ENCODE measurements at regions of chr2 and their contacts with region 1.

Region 1: GRCh38 chr2:156589381-156590079 is 153.4 kb downstream of the GPD2 start:
- DNase-seq: no peak
- H3K4me3 ChIP-seq: no peak overlapping the region
- H3K27ac ChIP-seq: no peak overlapping the region
- H3K4me1 ChIP-seq: peaks cover 0 to 3% (median 3%) of the 10 kb centered on the region in 4 donors
- H3K27me3 ChIP-seq: no peaks in the 10 kb centered on the region
- CTCF ChIP-seq: peak; percentile 54 to 58 (median 54)
- EP300 ChIP-seq: no peak
- POLR2A ChIP-seq: no peak

Region 2: DNA sequence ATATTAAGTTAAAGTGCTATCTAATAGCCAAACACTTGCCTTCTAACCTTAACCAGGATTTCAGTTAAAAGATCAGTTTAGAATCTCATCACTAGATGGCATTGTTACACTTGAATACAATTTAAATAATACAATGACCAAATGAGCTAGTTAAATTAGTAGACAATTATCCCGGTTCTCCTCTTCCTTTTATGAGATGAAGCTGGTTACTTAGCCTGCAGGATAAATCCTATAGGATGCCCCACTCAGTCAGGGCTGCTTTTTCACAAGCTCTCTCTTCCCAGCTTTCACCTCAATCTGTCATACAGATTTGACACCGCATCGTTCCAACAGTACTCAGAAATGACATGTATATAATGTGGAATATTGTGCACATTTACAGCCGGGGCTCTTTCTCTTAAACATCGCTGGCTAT is 1212.3 kb before region 1 on chr2:
- intact Hi-C with region 1: loop called (anchors 10 kb)
- DNase-seq: no peak
- H3K4me3 ChIP-seq: no peak overlapping the region
- H3K27ac ChIP-seq: no peak overlapping the region
- H3K4me1 ChIP-seq: no peaks in the 10 kb centered on the region
- H3K27me3 ChIP-seq: no peaks in the 10 kb centered on the region
- CTCF ChIP-seq: peak in 1 of 3 experiments; percentile 35
- EP300 ChIP-seq: no peak
- POLR2A ChIP-seq: no peak

Region 3: GRCh38 chr2:156192468-156192867 is 397.1 kb before region 1 on chr2:
- intact Hi-C with region 1: loop called (anchors 10 kb)
- DNase-seq: no peak
- H3K4me3 ChIP-seq: no peak overlapping the region
- H3K27ac ChIP-seq: no peak overlapping the region
- H3K4me1 ChIP-seq: no peaks in the 10 kb centered on the region
- H3K27me3 ChIP-seq: no peaks in the 10 kb centered on the region
- CTCF ChIP-seq: peak in 1 of 3 experiments; percentile 17
- EP300 ChIP-seq: no peak
- POLR2A ChIP-seq: no peak

Region 4: DNA sequence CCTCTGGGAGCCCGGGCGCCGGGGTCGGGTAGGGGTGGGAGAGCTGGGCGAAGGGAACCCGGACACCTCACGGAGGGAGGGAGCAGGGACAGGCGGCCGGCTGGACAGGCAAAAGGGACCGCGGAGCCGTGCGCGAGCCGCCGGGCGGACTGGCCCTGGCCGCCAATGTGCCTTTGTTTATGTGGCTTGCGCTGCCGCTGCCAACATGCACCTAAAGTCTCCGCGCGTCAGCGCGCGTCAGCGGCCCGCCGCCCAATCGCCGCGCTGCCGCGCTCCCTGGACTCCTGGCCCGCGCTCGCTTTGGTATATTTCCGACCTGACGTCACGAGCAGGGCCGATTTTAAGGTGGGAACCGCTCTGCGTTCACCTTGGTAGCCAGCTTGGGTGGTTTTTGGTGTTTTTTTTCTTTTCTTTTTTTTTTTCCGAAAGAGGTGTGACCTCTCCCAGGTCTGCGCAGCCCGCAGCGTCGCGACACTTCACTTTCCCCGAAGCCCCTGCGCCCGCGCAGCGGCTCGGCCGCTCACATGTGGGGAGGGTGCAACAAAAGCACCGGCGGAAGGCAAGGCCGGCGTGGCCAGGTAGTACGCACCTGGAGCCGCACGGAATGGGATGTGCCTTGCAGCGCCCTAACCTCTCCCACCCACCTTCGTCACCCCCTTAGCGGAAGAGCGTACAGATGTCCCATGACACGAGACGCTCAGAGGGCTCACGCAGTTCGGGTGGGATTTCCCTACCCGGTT is 256.8 kb before region 1 on chr2 and contains the start of gene NR4A2:
- intact Hi-C with region 1: loop called (anchors 5 kb)
- DNase-seq: no peak
- H3K4me3 ChIP-seq: peak within 1 kb of the TSS; percentile 75 to 84 (median 80)
- H3K27ac ChIP-seq: peak within 1 kb of the TSS; percentile 97 to 100 (median 99)
- H3K4me1 ChIP-seq: peaks cover 9 to 48% (median 34%) of the 10 kb centered on the region in 4 donors
- H3K27me3 ChIP-seq: no peaks in the 10 kb centered on the region
- CTCF ChIP-seq: no peak
- EP300 ChIP-seq: no peak
- POLR2A ChIP-seq: peak; percentile 83
- total RNA-seq, gene NR4A2: 0.42 to 2.8 (median 2.5) TPM

Region 5: DNA sequence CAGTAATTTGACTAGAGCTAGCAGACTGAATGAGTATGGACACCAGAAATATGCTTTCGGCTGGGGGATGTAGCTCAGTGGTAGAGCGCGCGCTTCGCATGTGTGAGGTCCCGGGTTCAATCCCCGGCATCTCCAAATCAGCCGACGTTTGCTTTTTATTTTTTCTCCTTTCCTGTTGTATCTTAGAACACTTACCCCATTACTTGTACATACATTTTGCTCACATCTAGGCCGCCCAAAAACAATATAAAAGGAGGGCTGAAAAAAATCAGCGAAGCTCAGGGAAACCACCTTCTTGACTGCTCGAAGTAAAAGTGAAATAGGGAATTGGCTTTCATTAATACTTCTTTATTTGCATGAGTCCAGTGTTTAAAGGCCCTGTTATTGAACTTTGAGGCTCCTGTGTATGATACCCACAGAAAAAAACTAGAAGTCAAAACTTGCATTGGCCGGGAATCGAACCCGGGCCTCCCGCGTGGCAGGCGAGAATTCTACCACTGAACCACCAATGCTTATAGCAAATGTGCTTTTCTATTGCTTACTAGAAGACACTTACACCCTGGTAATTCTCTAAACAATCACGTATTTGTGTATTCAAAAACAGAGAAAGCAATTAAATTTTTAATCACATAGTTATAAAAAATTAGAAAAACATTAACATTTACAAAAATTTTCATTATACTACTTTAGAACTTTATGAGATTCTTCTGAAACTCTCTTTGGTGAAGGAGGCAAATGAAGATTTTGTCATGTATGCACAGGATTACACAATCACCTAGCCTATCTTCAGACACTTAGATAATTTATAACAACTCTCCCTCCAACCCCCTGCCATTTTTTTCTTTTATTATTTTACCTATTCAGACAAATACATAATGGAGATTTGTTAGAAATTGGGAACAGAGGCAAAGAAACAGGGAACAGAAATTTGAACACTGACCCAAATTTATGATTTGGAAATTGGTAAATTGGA is 188.5 kb before region 1 on chr2:
- intact Hi-C with region 1: loop called (anchors 10 kb)
- DNase-seq: peak; percentile 97
- H3K4me3 ChIP-seq: peak overlapping the region; percentile 59 to 76 (median 69)
- H3K27ac ChIP-seq: peak overlapping the region; percentile 88 to 97 (median 92)
- H3K4me1 ChIP-seq: peaks cover 7 to 13% (median 9%) of the 10 kb centered on the region in 4 donors
- H3K27me3 ChIP-seq: no peaks in the 10 kb centered on the region
- CTCF ChIP-seq: no peak
- EP300 ChIP-seq: no peak
- POLR2A ChIP-seq: peak; percentile 15

Region 6: GRCh38 chr2:156435715-156436496 is 153.6 kb before region 1 on chr2 and contains the start of gene GPD2:
- intact Hi-C with region 1: no loop called
- DNase-seq: peak; percentile 97
- H3K4me3 ChIP-seq: peak within 1 kb of the TSS; percentile 66 to 89 (median 81)
- H3K27ac ChIP-seq: peak within 1 kb of the TSS; percentile 92 to 99 (median 98)
- H3K4me1 ChIP-seq: peaks cover 7 to 38% (median 35%) of the 10 kb centered on the region in 4 donors
- H3K27me3 ChIP-seq: no peaks in the 10 kb centered on the region
- CTCF ChIP-seq: peak in 1 of 3 experiments; percentile 6
- EP300 ChIP-seq: no peak
- POLR2A ChIP-seq: peak; percentile 82
- total RNA-seq, gene GPD2: 19.5 to 26.0 (median 22.5) TPM

Region 7: DNA sequence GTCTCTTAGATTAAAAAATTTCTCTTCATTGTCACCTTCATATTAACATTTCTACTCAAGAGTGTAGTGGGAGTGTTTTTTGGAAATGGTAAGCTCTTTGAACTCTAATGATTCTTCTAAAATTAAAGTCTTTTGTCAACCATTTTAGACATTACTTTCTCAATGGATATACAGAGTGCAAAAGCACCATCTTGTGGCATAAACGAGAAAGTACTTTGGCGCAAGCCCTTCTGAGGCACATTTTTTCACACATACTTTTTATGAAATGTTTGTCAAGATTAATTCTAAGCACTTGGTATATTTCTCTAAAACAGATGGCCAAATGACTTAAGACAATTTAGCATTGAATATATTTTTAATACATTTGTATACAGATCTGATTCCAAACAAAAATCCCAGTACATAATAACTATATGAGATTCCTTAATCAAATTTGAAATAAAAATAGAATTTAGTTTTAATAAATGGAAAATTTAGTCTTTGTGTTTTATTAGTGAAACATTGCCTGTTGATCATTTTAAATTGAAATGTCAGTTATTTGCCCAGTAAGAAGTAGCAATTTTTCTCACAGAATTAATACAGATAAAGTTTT is 604.7 kb after region 1 on chr2:
- intact Hi-C with region 1: loop called (anchors 10 kb)
- DNase-seq: no peak
- H3K4me3 ChIP-seq: no peak overlapping the region
- H3K27ac ChIP-seq: no peak overlapping the region
- H3K4me1 ChIP-seq: peaks cover 0 to 10% (median 7%) of the 10 kb centered on the region in 4 donors
- H3K27me3 ChIP-seq: no peaks in the 10 kb centered on the region
- CTCF ChIP-seq: peak; percentile 70 to 82 (median 77)
- EP300 ChIP-seq: no peak
- POLR2A ChIP-seq: no peak